B cell (primary cell): ENCODE measurements at regions of chr19 and their contacts with region 1.

Region 1: DNA sequence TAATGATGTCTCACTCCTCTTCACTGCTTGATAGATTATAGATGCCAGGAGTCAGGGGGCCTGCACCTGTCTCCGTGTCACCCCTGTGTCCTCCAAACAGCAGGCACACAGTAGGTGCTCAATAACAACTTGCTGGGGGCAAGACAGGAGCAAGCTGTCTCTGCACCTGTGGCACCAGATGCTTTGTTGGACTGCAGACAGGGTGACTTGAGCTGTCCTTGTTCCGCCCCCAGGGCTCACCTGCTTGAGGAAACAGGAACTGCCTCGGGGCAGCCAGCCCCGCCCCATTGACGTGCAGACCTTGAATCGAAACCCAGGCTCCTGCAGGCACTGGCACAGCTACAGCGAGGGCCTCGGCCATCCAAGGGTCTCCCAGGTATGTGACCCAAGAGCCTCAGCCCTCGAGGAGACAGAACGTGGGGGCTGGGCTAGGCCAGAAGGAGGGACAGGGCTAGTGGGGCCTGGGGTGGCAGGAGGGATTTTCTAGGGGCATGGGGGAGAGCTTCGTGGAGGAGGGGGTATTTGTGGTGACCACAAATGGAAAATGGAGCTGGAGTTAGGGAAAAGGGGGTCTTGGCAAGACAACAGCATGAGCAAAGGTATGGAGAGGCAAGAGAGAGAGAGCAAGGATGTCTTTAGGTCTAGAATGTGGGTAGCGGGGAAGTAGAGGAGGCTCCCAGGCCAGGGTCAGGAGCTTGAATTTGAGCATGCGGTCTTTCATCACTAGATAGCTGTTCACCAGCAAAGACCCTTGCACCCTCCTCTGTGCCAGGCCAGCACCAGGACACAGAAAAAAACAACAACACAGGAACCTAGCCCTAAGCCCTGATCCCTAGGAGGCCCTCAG is at the start of gene HSH2D:
- DNase-seq: peak; percentile 95
- ATAC-seq: peak; percentile 71
- H3K4me3 ChIP-seq: peak within 1 kb of the TSS; percentile 73 to 94 (median 91)
- H3K4me3 Mint-ChIP-seq: peak within 1 kb of the TSS; percentile 95
- H3K27ac ChIP-seq: peak within 1 kb of the TSS; percentile 95 to 97
- H3K27ac Mint-ChIP-seq: peak within 1 kb of the TSS; percentile 100
- H3K4me1 ChIP-seq: peaks cover 71 to 93% of the 10 kb centered on the region in 2 donors
- H3K4me1 Mint-ChIP-seq: peaks cover 78% of the 10 kb centered on the region
- H3K27me3 ChIP-seq: no peaks in the 10 kb centered on the region
- H3K27me3 Mint-ChIP-seq: no peaks in the 10 kb centered on the region
- CTCF ChIP-seq: no peak
- total RNA-seq, gene HSH2D: 254 and 259 TPM in 2 replicates

Region 2: GRCh38 chr19:16041299-16041990 is 102.2 kb before region 1 on chr19:
- CTCF ChIA-PET with region 1: interaction called, 15 read pairs
- POLR2A ChIA-PET with region 1: interaction called, 10 read pairs
- intact Hi-C with region 1: no loop called
- DNase-seq: peak; percentile 80
- ATAC-seq: peak; percentile 86
- H3K4me3 ChIP-seq: no peak overlapping the region
- H3K4me3 Mint-ChIP-seq: no peak overlapping the region
- H3K27ac ChIP-seq: no peak overlapping the region
- H3K27ac Mint-ChIP-seq: no peak overlapping the region
- H3K4me1 ChIP-seq: peaks cover 7 to 8% of the 10 kb centered on the region in 2 donors
- H3K4me1 Mint-ChIP-seq: peaks cover 10% of the 10 kb centered on the region
- H3K27me3 ChIP-seq: peaks cover 0 to 4% (median 0%) of the 10 kb centered on the region in 4 experiments
- H3K27me3 Mint-ChIP-seq: no peaks in the 10 kb centered on the region
- CTCF ChIP-seq: peak; percentile 95

Region 3: DNA sequence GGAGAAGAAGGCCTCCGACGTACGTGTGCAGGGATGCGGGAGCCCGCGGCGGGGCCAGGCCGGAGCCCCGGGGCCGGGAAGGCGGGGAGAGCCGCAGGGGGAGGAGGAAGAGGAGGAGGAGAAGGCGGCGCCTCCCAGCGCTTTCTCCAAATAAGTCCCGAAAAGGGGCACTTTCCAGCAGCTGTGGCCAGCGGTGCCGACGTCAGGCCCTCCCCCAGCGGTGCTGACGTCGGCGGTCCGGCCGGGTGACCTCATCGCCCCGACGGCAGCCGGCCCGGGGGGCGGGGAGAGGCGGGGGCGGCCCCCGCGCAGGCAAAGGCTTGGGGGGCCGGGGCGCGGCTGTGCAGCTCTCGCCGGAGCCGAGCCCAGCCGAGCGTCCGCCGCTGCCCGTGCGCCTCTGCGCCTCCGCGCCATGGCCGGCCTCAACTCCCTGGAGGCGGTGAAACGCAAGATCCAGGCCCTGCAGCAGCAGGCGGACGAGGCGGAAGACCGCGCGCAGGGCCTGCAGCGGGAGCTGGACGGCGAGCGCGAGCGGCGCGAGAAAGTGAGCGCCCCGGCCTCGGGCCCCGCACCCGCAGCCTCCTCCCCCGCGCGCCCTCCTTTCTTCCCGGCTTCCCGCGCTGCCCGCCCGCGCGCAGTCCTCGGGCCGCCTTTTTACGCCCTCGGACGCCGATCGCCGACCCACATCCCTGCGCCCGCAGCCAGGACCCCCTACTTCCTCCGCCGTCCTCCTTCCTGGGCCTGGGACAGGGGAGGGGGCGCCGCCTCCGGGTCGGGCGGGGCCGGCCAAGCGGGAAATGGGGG is 67.3 kb before region 1 on chr19 and contains the start of gene TPM4:
- CTCF ChIA-PET with region 1: interaction called, 5 read pairs
- POLR2A ChIA-PET with region 1: interaction called, 15 read pairs
- intact Hi-C with region 1: loop called (anchors 2 kb)
- DNase-seq: peak; percentile 93
- ATAC-seq: peak; percentile 60
- H3K4me3 ChIP-seq: peak within 1 kb of the TSS; percentile 56 to 86 (median 73)
- H3K4me3 Mint-ChIP-seq: peak within 1 kb of the TSS; percentile 88
- H3K27ac ChIP-seq: peak within 1 kb of the TSS; percentile 91 to 92
- H3K27ac Mint-ChIP-seq: peak within 1 kb of the TSS; percentile 94
- H3K4me1 ChIP-seq: peaks cover 35 to 56% of the 10 kb centered on the region in 2 donors
- H3K4me1 Mint-ChIP-seq: peaks cover 60% of the 10 kb centered on the region
- H3K27me3 ChIP-seq: no peaks in the 10 kb centered on the region
- H3K27me3 Mint-ChIP-seq: no peaks in the 10 kb centered on the region
- CTCF ChIP-seq: no peak
- total RNA-seq, gene TPM4: 127 TPM in 2 replicates

Region 4: DNA sequence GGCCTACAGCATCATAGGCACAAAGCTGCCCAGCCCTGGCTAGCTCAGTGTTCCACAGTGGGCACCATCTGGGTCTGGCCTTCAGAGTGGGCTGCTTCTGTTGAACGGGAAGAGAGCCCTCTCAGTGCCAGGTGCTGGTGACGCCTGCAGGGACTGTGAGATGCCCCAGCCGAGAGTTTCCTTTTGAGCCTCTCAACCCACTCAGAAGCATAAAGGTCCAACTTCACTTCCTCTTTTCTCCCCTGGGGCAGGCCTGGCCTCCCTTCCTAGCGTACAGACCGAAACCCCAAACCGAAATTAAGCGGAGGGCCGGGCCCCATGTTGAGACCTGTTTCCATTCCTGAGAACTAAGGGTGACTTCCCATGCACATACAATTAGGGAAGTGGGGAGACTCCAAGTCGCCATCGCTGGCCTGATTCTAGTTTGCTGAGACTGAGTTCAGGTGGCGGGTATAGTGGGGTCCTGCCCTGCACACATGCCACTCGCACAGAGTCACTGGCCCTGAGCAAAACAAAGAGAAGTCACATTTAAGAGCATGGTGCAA is 25.1 kb before region 1 on chr19:
- CTCF ChIA-PET with region 1: interaction called, 63 read pairs
- POLR2A ChIA-PET with region 1: interaction called, 54 read pairs
- intact Hi-C with region 1: loop called (anchors 1 kb)
- DNase-seq: peak; percentile 93
- ATAC-seq: peak; percentile 91
- H3K4me3 ChIP-seq: peak overlapping the region in 3 of 5 experiments; percentile 11 to 48 (median 23)
- H3K4me3 Mint-ChIP-seq: peak overlapping the region; percentile 70
- H3K27ac ChIP-seq: peak overlapping the region; percentile 86 to 88
- H3K27ac Mint-ChIP-seq: peak overlapping the region; percentile 97
- H3K4me1 ChIP-seq: peaks cover 64 to 75% of the 10 kb centered on the region in 2 donors
- H3K4me1 Mint-ChIP-seq: peaks cover 66% of the 10 kb centered on the region
- H3K27me3 ChIP-seq: no peaks in the 10 kb centered on the region
- H3K27me3 Mint-ChIP-seq: no peaks in the 10 kb centered on the region
- CTCF ChIP-seq: no peak

Region 5: DNA sequence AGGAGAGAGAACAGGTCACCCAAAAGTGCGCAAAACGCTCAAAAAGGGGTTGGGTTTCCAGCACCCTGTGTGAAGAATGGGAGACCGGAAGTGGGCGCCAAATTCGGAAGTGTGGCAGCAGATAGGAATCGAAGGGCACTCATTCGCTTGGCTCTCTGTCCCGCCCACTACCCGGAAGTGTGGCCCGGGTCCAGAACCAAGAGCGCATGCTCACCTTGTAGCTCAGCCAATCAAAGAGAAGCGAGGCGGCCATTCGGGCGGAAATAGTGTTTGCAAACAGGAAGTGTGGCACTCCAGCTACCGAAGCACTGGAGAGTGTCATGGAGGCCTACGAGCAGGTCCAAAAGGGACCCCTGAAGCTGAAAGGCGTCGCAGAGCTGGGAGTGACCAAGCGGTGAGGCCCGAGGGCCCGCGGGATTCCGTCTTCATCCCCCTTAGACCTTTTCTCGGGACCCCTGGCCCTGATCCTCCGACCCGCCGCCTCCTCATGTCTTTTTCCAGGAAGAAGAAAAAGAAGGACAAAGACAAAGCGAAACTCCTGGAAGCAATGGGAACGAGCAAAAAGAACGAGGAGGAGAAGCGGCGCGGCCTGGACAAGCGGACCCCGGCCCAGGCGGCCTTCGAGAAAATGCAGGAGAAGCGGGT is 41.6 kb after region 1 on chr19 and contains the start of gene FAM32A:
- CTCF ChIA-PET with region 1: interaction called, 26 read pairs
- POLR2A ChIA-PET with region 1: interaction called, 19 read pairs
- intact Hi-C with region 1: loop called (anchors 1 kb)
- DNase-seq: peak; percentile 99
- ATAC-seq: peak; percentile 88
- H3K4me3 ChIP-seq: peak within 1 kb of the TSS; percentile 65 to 99 (median 71)
- H3K4me3 Mint-ChIP-seq: peak within 1 kb of the TSS; percentile 97
- H3K27ac ChIP-seq: peak within 1 kb of the TSS; percentile 60 to 83
- H3K27ac Mint-ChIP-seq: peak within 1 kb of the TSS; percentile 96
- H3K4me1 ChIP-seq: peaks cover 14 to 37% of the 10 kb centered on the region in 2 donors
- H3K4me1 Mint-ChIP-seq: peaks cover 33% of the 10 kb centered on the region
- H3K27me3 ChIP-seq: no peaks in the 10 kb centered on the region
- H3K27me3 Mint-ChIP-seq: no peaks in the 10 kb centered on the region
- CTCF ChIP-seq: no peak
- total RNA-seq, gene FAM32A: 53.4 TPM in 2 replicates

Region 6: GRCh38 chr19:16324384-16325160 is 180.9 kb after region 1 on chr19 and contains the start of gene KLF2:
- CTCF ChIA-PET with region 1: no interaction called
- POLR2A ChIA-PET with region 1: interaction called, 6 read pairs
- intact Hi-C with region 1: loop called (anchors 5 kb)
- DNase-seq: peak; percentile 99
- ATAC-seq: peak; percentile 59
- H3K4me3 ChIP-seq: peak within 1 kb of the TSS; percentile 35 to 100 (median 98)
- H3K4me3 Mint-ChIP-seq: peak within 1 kb of the TSS; percentile 76
- H3K27ac ChIP-seq: peak within 1 kb of the TSS; percentile 99
- H3K27ac Mint-ChIP-seq: peak within 1 kb of the TSS; percentile 91
- H3K4me1 ChIP-seq: peaks cover 42 to 55% of the 10 kb centered on the region in 2 donors
- H3K4me1 Mint-ChIP-seq: peaks cover 61% of the 10 kb centered on the region
- H3K27me3 ChIP-seq: no peaks in the 10 kb centered on the region
- H3K27me3 Mint-ChIP-seq: no peaks in the 10 kb centered on the region
- CTCF ChIP-seq: no peak
- total RNA-seq, gene KLF2: 241 and 242 TPM in 2 replicates